ENCODE measurements at regions of chr1 and their contacts with region 1.

Region 1: DNA sequence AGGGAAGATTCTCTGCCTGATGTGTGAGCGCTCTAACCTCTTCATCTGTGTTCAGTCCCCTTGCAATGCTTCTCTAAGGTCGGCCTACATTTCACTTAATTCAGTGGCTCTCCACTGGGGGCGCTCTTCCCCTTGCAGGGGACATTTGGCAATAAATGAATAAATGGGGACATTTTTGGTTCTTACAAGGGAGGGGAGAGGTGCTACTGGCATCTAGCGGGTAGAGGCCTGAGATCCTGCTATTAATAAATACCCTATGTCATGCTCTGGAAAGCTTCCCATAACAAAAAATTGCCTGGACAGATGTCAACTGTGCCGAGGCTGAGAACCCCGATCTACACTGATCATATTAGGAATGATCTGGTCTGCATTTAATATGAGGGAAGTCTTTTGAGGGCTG is 25.9 kb upstream of the DNAJC11 start:
- DNase-seq: peak; percentile 49
- ATAC-seq: peak; percentile 58

Region 2: GRCh38 chr1:6624710-6625583 is 102.6 kb before region 1 on chr1 and contains the start of gene THAP3:
- intact Hi-C with region 1: no loop called
- DNase-seq: peak; percentile 93
- ATAC-seq: peak; percentile 96
- total RNA-seq, gene THAP3: 11.5 TPM

Region 3: DNA sequence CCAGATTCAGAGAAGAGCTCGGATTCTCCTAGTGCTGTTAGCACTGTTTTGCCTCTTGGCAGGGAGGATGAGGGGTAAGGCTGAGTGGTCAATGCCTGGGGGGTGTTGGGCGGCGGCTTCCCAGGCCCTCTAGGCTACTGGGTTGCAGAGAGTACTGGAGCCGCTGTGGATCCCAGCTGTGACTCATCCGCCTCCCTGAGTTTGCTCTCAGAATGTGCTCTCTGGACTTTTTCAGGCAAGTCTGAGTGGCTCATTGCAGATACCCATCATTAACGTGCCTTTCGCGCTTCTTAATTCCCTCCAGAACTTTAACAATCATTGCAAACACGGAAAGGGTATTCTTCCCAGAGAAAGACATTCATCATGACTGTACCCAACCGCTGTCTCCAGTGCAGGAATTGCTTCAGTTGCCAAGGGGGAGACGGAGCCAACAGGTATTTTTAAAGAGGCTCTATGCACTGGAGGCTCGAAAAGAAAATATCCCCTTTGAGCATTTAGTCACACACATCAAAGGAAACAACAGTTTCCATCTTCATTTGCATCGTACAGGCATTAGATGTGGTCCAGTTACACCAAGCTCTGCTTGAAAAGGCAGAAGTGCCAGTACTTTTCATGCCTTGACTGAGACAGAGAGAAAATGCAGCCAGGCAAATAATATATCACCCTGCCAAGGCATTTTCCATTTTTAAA is 43.4 kb after region 1 on chr1:
- intact Hi-C with region 1: loop called (anchors 10 kb)
- DNase-seq: no peak
- ATAC-seq: no peak

Region 4: DNA sequence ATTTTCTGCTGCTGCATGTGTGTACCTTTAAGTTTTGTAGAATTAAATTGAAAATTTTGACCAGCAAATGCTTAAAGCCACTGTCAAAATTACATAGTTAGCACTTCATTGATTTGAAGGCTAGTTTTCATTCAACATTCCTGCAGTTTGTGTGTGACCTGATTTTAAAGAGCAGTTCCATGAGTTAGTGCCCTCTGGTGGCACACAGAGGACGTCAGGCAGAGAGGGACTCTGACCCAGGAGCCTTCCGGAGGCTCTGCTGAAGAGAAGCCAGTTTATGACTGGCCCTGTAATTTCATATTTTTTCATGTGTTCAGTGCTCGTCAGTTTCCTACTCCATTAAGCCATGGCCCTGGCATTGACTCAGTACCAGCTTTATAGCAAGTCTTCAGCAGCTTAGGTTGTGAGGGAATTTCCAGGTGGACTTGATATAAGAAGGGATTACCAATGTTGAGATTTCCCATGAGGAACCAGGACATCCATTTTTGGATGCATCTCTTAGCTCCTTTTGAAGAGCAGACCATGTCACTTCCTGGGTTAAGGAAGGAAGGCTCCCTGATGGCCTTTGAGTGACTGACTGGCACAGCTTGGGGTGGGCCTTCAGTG is 162.4 kb after region 1 on chr1:
- intact Hi-C with region 1: loop called (anchors 2 kb)
- DNase-seq: peak; percentile 57
- ATAC-seq: peak; percentile 60

Region 5: GRCh38 chr1:6911974-6912373 is 184.4 kb after region 1 on chr1:
- intact Hi-C with region 1: no loop called
- DNase-seq: no peak
- ATAC-seq: no peak

Region 6: DNA sequence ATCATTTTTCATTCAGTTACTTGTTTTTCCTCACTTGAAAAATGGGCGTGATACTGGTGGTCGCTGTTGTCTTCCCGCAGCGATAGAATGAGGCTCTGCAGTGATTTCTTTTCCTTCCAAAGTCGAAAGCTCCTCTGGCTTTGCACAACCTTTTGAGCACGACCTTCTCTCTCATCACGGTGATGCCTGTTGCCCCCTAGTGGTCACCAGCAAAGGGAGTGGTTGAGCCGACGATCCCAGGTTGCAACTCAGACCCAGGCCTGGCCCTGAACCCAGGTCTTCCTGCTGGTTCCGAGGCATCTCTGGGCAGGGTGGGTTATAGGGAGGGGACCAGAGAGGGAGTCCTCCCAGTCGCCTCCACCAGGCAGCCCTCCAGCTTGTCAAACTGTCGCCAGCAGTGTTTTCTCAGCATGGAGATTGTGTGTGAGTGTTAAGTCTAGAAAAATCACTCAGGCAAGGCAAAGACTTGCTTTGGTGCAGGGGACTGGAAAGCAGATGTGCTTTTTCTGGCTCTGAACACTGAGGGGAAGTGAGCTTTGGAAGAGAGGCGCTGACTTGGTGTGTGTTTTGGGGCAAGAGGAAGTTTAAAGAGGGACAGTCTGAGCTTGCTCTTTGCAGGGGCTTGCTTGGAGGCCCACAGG is 343.0 kb after region 1 on chr1:
- intact Hi-C with region 1: loop called (anchors 5 kb)
- DNase-seq: peak; percentile 52
- ATAC-seq: peak; percentile 91

Region 7: GRCh38 chr1:7218210-7218832 is 490.8 kb after region 1 on chr1:
- intact Hi-C with region 1: loop called (anchors 10 kb)
- DNase-seq: no peak
- ATAC-seq: no peak

Region 8: DNA sequence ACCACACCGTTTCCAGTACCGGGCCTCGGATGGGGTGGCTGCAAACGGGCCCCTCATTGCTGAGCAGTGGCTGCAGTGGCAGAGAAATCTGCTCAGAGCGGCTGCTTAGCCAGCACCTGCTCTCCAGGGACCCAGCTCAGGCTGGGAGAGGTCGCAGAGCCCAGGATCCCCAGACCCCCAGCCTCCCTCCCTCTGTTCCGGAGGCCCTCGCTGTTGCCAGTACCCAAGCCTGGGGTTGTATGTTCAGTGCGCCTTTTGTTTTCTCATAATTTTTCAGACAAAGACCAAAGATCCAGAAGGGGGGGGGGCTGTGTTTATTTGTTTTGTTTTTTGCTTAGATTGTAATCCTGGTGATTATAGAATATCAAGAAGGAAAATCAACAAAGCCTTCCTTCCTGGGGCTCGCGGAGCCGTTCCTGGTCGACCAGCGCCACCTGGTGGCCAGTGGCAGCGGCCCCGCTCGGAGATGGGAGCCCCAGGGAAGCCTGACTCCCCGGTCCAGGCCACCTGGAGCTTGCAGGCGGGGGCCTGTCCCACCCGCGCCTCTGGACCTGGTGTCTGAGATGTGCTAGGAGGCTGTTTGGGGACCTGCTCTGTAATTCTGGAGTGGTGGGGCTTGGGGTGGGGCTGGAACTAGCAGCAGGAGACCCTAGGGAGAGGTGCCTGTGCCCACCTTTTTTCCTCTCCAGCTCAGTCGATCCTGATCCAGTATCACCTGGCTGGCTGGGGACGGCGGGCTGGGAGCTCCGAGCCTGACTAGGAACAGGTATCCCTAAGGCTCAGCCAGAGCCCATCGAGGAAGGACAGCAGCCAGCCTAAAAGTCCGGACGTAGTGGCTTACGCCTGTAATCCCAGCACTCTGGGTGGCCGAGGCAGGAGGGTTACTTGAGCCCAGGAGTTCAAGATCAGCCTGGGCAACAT is 919.7 kb after region 1 on chr1:
- intact Hi-C with region 1: loop called (anchors 5 kb)
- DNase-seq: peak; percentile 82
- ATAC-seq: peak; percentile 46